Activated CD4-positive, alpha-beta T cell treated with anti-CD3 and anti-CD28 coated beads for 36 hours (primary cell): ENCODE measurements at regions of chr9 and their contacts with region 1.

Region 1: DNA sequence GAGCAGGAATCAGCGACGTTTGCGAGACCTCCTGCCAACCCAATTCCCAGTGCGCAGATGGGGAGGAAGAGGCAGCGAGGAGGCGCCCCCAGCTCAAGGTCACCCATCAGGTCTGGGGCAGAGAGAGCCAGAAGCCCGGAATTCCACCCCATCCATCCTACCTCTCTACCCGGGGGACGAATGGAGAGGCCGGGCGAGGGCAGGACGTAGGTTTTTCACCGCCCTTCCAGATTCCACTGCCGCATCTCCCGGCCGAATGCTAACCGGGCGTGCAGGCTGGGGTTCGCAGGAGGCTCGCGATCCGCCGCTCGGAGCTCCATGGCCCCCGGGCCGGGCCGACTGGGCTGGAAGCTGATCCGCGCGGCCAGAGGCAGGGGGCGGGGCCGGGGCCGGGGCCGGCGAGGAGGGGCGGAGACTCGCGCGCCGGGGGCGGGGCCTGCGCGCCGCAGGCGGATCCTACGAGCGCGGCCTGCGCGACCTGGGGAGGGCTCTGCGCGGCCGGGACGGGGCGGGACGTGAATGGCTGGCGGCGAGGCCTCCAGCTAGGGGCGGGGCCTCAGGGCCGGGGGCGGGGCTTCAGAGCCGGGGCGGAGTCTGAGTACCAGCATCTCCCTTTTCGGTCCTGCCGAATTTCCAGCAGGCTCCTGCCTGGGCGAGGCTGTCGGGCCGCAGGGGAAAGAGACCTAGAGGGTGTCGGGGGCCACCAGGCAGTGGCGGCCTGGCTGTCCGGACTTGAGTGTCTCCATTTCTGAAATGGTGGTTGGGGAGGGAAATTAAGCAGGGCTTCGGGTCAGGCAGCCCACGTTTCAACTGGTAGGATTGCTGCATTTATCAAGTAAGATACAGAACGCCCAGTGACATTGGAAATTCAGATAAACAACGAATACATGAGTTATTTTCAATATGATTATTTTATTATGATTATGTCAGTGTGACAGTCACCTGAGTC is at the start of gene ST6GALNAC4:
- DNase-seq: peak; percentile 98
- ATAC-seq: peak; percentile 96
- H3K4me3 Mint-ChIP-seq: peak within 1 kb of the TSS; percentile 76
- H3K27ac Mint-ChIP-seq: peak within 1 kb of the TSS; percentile 69
- H3K4me1 Mint-ChIP-seq: peaks cover 47% of the 10 kb centered on the region
- H3K27me3 Mint-ChIP-seq: no peaks in the 10 kb centered on the region
- total RNA-seq, gene ST6GALNAC4: 14.9 to 20.7 TPM

Region 2: GRCh38 chr9:127224178-127224882 is 692.6 kb before region 1 on chr9:
- CTCF ChIA-PET with region 1: interaction called, 3 read pairs
- POLR2A ChIA-PET with region 1: no interaction called
- intact Hi-C with region 1: loop called in 1 of 2 experiments (anchors 2 kb)
- DNase-seq: peak; percentile 93
- ATAC-seq: peak; percentile 79
- H3K4me3 Mint-ChIP-seq: peak overlapping the region; percentile 68
- H3K27ac Mint-ChIP-seq: peak overlapping the region; percentile 16
- H3K4me1 Mint-ChIP-seq: peaks cover 24% of the 10 kb centered on the region
- H3K27me3 Mint-ChIP-seq: peaks cover 15% of the 10 kb centered on the region

Region 3: DNA sequence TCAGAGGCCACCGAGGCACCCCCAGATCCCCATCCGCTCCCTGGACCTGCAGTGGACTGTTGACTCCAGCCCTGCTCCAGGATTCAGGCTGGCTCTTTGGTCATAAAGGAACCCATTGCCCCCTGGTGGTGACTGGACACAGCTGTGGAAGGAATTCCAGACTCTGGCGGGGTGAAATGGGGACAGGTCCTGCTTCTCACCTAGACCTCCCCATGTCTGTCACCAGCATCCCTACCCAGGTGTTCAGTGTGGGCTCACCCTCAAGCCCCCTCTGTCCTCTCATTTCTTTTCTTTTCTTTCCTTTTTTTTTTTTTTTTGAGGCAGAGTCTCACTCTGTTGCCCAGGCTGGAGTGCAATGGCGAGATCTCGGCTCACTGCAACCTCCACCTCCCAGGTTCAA is 330.4 kb before region 1 on chr9:
- CTCF ChIA-PET with region 1: interaction called, 4 read pairs
- POLR2A ChIA-PET with region 1: no interaction called
- intact Hi-C with region 1: loop called in 1 of 2 experiments (anchors 1 kb)
- DNase-seq: peak; percentile 75
- ATAC-seq: peak; percentile 74
- H3K4me3 Mint-ChIP-seq: no peak overlapping the region
- H3K27ac Mint-ChIP-seq: no peak overlapping the region
- H3K4me1 Mint-ChIP-seq: peaks cover 4% of the 10 kb centered on the region
- H3K27me3 Mint-ChIP-seq: peaks cover 15% of the 10 kb centered on the region

Region 4: DNA sequence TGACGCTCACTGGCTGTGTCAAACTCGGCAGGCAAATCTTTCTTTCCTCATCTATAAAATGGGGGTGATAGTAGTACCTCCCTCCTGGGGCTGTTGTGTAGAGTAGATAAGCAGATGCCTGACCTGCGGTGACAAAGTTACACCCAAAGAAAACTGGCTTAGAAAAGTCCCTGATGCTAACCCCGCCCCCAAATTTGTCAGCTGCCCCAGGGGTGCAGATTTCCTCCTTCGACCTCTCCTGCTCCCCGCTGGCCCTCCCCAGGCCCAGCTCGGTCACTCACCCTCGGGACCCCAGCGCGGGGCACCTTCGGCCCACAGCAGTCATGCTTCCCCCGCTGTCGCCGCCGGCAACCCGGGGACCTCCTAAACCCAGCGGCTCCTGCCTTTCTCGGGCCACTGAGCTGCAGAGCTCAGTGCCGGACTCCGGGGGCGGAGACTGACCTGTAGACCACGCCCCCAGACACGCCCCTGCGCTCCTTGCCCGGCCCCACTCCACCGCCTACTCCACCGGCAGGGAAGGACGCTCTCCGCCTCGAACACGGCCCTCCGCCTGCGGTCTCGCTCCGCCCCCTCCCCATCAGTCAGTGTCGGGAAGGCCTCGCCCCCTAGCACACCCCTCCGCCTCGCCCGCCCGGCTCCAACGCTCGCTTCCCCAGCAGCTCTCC is 145.9 kb before region 1 on chr9:
- CTCF ChIA-PET with region 1: interaction called, 3 read pairs
- POLR2A ChIA-PET with region 1: no interaction called
- intact Hi-C with region 1: loop called in 1 of 2 experiments (anchors 1 kb)
- DNase-seq: peak; percentile 99
- ATAC-seq: peak; percentile 95
- H3K4me3 Mint-ChIP-seq: peak overlapping the region; percentile 80
- H3K27ac Mint-ChIP-seq: peak overlapping the region; percentile 80
- H3K4me1 Mint-ChIP-seq: peaks cover 59% of the 10 kb centered on the region
- H3K27me3 Mint-ChIP-seq: no peaks in the 10 kb centered on the region

Region 5: GRCh38 chr9:127869310-127870152 is 47.4 kb before region 1 on chr9:
- CTCF ChIA-PET with region 1: interaction called, 14 read pairs
- POLR2A ChIA-PET with region 1: no interaction called
- intact Hi-C with region 1: loop called (anchors 1 to 5 kb)
- DNase-seq: peak; percentile 91
- ATAC-seq: peak; percentile 75
- H3K4me3 Mint-ChIP-seq: no peak overlapping the region
- H3K27ac Mint-ChIP-seq: no peak overlapping the region
- H3K4me1 Mint-ChIP-seq: peaks cover 16% of the 10 kb centered on the region
- H3K27me3 Mint-ChIP-seq: no peaks in the 10 kb centered on the region

Region 6: GRCh38 chr9:127930231-127931091 is 13.5 kb after region 1 on chr9 and contains the start of gene PIP5KL1:
- CTCF ChIA-PET with region 1: interaction called, 9 read pairs
- POLR2A ChIA-PET with region 1: interaction called, 3 read pairs
- intact Hi-C with region 1: loop called in 1 of 2 experiments (anchors 1 kb)
- DNase-seq: peak; percentile 82
- ATAC-seq: peak; percentile 71
- H3K4me3 Mint-ChIP-seq: peak within 1 kb of the TSS; percentile 45
- H3K27ac Mint-ChIP-seq: no peak within 1 kb of the TSS
- H3K4me1 Mint-ChIP-seq: peaks cover 30% of the 10 kb centered on the region
- H3K27me3 Mint-ChIP-seq: no peaks in the 10 kb centered on the region
- total RNA-seq, gene PIP5KL1: 1.9 to 2.8 TPM